SK-N-SH (cell line): ENCODE measurements at regions of chr5 and their contacts with region 1.

Region 1: GRCh38 chr5:177113566-177114424 is 19.8 kb upstream of the NSD1 start:
- DNase-seq: peak; percentile 89
- H3K4me3 ChIP-seq: no peak overlapping the region; a peak in 1 of 4 replicates
- H3K27ac ChIP-seq: no peak overlapping the region
- H3K4me1 ChIP-seq: no peaks in the 10 kb centered on the region; a peak in 1 of 4 replicates
- H3K27me3 ChIP-seq: no peaks in the 10 kb centered on the region
- CTCF ChIP-seq: peak; percentile 99
- EP300 ChIP-seq: no peak
- RAD21 ChIP-seq: peak; percentile 99

Region 2: DNA sequence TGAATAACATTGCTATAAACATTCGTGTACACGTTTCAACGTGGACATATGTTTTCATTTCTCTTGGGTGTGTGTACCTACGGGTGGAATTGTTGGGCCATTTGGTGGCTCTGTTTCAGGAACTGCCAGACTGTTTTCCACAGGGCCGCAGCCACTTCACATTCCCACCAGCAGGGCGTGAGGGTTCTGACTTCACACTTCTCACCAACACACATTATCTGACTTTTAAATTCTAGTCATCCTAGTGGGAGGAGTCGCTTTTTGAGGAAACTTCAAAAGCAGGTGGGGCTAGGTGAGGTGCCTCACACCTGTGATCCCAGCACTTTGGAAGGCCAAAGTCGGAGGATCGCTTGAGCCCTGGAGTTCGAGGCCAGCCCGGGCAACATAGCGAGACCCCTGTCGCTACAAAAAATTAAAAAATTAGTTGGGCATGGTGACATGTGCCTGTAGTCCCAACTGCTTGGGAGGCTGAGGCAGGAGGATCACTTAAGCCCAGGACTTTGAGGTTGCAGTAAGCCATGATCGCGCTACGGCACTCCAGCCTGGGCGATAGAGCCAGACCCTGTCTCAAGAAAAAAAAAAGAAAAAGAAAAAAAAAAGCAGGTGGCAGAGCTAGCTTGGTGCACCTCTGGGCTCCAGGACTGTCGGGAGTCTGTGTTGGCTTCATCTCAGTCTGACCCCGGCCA is 438.0 kb before region 1 on chr5:
- CTCF ChIA-PET with region 1: no interaction called
- POLR2A ChIA-PET with region 1: no interaction called
- DNase-seq: no peak
- H3K4me3 ChIP-seq: no peak overlapping the region; a peak in 1 of 4 replicates
- H3K27ac ChIP-seq: no peak overlapping the region
- H3K4me1 ChIP-seq: peaks cover 0 to 7% of the 10 kb centered on the region in 2 experiments; a peak in 1 of 4 replicates
- H3K27me3 ChIP-seq: no peaks in the 10 kb centered on the region
- CTCF ChIP-seq: peak; percentile 53
- EP300 ChIP-seq: no peak
- RAD21 ChIP-seq: no peak

Region 3: DNA sequence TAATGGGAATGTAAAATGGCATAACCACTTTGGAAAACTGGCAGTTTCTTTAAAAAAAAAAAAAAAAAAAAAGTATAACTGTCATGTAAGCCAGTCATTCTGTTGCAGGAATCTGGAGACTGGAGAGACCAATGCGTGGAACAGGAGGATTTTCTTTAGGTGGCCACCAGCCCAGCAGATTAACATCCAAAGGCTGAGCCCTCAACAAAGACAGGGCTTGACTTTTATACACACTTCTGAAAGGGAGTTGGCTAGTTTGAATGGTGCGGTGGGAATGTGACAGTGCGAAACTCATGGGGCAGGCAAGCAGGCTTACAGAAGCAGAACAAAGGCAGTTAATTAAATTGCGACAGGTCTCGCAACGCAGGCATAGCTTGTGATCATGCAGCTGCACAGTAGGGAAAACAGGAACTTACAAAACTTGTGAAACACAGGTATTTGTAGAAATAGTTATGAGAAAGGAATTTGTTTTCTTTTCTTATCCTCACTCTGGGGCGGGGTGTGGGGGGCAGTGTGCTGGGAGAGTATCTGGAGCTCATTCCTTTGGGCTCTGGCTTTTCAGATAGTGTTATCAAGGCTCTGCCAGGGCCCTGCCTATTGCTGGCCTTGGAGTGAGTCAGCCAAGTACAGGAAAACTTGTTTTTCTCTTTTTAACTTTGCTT is 119.2 kb before region 1 on chr5:
- CTCF ChIA-PET with region 1: no interaction called
- POLR2A ChIA-PET with region 1: no interaction called
- DNase-seq: no peak
- H3K4me3 ChIP-seq: no peak overlapping the region
- H3K27ac ChIP-seq: no peak overlapping the region
- H3K4me1 ChIP-seq: 0 out of 4 replicates have a peak, but pooled peaks cover 0 to 5% of the 10 kb centered on the region in 2 experiments
- H3K27me3 ChIP-seq: no peaks in the 10 kb centered on the region
- CTCF ChIP-seq: no peak
- EP300 ChIP-seq: no peak
- RAD21 ChIP-seq: no peak

Region 4: GRCh38 chr5:177071666-177072385 is 42.0 kb before region 1 on chr5:
- CTCF ChIA-PET with region 1: interaction called, 141 read pairs
- POLR2A ChIA-PET with region 1: no interaction called
- DNase-seq: peak; percentile 74
- H3K4me3 ChIP-seq: no peak overlapping the region
- H3K27ac ChIP-seq: no peak overlapping the region
- H3K4me1 ChIP-seq: no peaks in the 10 kb centered on the region; a peak in 1 of 4 replicates
- H3K27me3 ChIP-seq: no peaks in the 10 kb centered on the region
- CTCF ChIP-seq: peak; percentile 92
- EP300 ChIP-seq: no peak
- RAD21 ChIP-seq: peak; percentile 77

Region 5: GRCh38 chr5:177086924-177087706 is 26.7 kb before region 1 on chr5:
- CTCF ChIA-PET with region 1: interaction called, 87 read pairs
- POLR2A ChIA-PET with region 1: interaction called, 5 read pairs
- DNase-seq: peak; percentile 88
- H3K4me3 ChIP-seq: peak overlapping the region; percentile 39 to 47; a peak in 3 of 4 replicates
- H3K27ac ChIP-seq: no peak overlapping the region
- H3K4me1 ChIP-seq: peaks cover 0 to 9% of the 10 kb centered on the region in 2 experiments; a peak in 1 of 4 replicates
- H3K27me3 ChIP-seq: no peaks in the 10 kb centered on the region
- CTCF ChIP-seq: peak; percentile 58
- EP300 ChIP-seq: no peak
- RAD21 ChIP-seq: no peak

Region 6: DNA sequence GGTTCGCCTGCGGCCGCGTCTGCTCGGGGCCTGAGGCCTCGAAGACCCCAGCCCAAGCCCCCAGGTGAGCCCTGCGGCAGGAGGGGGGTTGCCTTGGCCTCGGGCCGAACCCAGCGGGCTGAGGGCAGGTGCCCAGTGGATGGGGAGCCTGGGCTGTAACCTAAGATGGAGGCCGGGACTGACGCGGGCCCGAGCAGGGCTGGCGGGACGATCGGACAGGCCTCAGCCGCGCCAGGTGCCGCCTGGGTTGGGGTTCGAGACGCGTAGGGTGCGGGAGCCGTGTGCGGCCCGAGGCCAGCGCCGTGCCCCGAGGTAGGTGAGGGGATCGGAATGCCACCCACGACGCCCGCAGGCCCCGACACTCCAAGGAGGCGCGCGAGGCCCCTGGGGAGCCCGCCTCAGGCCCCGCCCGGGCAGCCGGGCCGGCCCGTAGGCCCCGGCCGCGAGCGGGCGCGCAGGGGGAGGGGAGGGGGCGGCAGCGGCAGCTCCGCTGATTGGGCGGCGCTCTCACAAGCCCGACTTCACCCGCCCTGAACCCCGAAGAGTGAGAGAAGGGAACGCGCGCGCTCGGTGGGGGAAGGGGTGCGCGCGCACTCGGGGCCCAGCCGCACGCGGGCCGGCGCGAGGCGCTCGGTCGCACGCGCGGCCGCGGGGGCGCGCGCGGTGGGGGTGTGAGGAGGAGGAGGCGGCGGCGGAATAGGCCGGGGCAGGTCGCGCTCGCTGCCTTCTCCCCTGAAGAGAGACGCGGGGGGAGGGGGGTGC is 19.5 kb after region 1 on chr5 and contains the start of gene NSD1:
- CTCF ChIA-PET with region 1: interaction called, 20 read pairs
- POLR2A ChIA-PET with region 1: no interaction called
- DNase-seq: peak; percentile 95
- H3K4me3 ChIP-seq: peak within 1 kb of the TSS; percentile 67 to 70
- H3K27ac ChIP-seq: peak within 1 kb of the TSS; percentile 62 to 89
- H3K4me1 ChIP-seq: peaks cover 16 to 23% of the 10 kb centered on the region in 2 experiments; a peak in 3 of 4 replicates
- H3K27me3 ChIP-seq: no peaks in the 10 kb centered on the region
- CTCF ChIP-seq: no peak
- EP300 ChIP-seq: no peak
- RAD21 ChIP-seq: no peak
- polyA plus RNA-seq, gene NSD1: 6.7 and 9.0 TPM in 2 replicates

Region 7: DNA sequence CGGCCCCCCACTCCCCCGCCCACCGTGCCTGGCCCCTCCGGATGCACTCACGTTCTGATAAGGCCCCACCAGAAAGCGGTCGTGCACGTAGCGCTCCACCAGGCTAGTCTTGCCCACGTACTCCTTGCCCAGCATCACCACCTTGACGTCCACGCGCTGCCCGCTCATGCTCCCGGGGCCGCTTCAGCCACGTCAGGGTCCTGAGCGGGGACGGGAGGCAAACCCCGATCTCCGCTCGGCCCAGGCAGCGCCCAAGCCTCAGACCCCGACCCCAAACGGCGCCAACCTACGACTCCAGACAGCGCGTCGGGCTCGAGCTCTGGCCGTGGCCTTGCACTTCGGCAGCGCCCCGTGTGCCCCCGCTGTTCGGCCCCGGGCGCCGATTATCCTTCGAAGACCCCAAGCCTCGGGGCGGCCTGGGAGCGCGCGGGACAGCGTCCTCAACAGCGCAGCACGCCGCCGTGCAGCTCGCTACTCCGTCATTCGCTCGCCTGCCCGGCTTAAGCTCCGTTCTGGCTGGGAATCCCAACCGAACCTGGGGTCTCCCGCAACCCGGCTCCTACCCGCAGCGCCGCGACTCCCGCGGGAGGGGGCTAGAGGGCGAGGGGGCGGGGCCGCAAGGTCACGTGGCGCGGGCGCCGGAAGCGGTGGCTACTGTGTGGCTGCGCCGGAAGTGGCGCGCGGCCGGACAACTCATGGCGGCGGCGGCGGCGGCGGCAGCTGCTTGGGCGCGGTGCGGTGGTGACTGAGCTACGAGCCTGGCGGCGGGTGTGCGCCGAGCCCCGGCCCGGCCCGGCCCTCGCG is 189.5 kb after region 1 on chr5 and contains the starts of genes PRELID1 and RAB24:
- CTCF ChIA-PET with region 1: interaction called, 48 read pairs
- POLR2A ChIA-PET with region 1: no interaction called
- DNase-seq: peak; percentile 98
- H3K4me3 ChIP-seq: peak within 1 kb of the TSS; percentile 93 to 98
- H3K27ac ChIP-seq: peak within 1 kb of the TSS; percentile 76 to 79
- H3K4me1 ChIP-seq: peaks cover 0 to 28% of the 10 kb centered on the region in 2 experiments; a peak in 1 of 4 replicates
- H3K27me3 ChIP-seq: no peaks in the 10 kb centered on the region
- CTCF ChIP-seq: peak; percentile 40
- EP300 ChIP-seq: peak in 1 of 2 experiments; percentile 17; a peak in 1 of 4 replicates
- RAD21 ChIP-seq: no peak
- polyA plus RNA-seq, gene PRELID1: 344 TPM in 2 replicates
- polyA plus RNA-seq, gene RAB24: 101 and 117 TPM in 2 replicates

Region 8: DNA sequence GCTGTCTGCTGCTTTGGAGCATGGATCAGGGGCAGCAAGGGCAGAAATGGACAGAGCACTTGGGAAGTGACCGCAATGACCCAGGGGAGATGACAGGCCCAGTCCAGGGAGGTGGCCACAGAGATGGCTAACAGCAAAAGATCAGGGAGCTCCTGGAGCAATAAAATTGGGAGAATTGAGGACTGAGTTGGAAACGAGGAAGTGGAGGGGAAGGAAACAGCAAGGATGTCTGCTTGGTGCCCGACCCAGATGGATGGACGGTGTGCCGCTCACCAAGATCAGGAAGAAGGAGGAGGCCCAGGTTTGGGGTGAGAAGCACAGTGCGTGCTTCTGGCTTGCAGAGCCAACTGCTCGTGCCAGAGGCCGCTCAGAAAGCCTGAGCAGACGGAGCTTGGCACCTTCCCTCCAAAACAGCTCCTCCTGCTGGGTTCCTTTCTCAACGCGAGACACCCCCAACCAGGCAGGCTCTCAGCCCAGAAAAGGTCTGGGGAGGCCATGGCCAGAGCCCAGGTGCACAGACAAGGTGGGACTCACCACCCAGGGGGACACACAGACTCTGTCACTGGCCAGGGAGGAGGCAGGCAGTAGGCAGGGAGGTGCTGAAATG is 268.7 kb after region 1 on chr5:
- CTCF ChIA-PET with region 1: interaction called, 10 read pairs
- POLR2A ChIA-PET with region 1: no interaction called
- DNase-seq: peak; percentile 56
- H3K4me3 ChIP-seq: no peak overlapping the region
- H3K27ac ChIP-seq: no peak overlapping the region
- H3K4me1 ChIP-seq: peaks cover 0 to 7% of the 10 kb centered on the region in 2 experiments; a peak in 2 of 4 replicates
- H3K27me3 ChIP-seq: no peaks in the 10 kb centered on the region
- CTCF ChIP-seq: peak; percentile 27
- EP300 ChIP-seq: no peak
- RAD21 ChIP-seq: peak; percentile 38

Region 9: GRCh38 chr5:177497292-177498033 is 383.7 kb after region 1 on chr5 and contains the start of gene PDLIM7:
- CTCF ChIA-PET with region 1: interaction called, 12 read pairs
- POLR2A ChIA-PET with region 1: no interaction called
- DNase-seq: peak; percentile 98
- H3K4me3 ChIP-seq: peak within 1 kb of the TSS; percentile 83 to 94
- H3K27ac ChIP-seq: peak within 1 kb of the TSS; percentile 80 to 94
- H3K4me1 ChIP-seq: peaks cover 32 to 62% of the 10 kb centered on the region in 2 experiments; a peak in 3 of 4 replicates
- H3K27me3 ChIP-seq: no peaks in the 10 kb centered on the region
- CTCF ChIP-seq: no peak; the same call in 1 of the 2 replicates
- EP300 ChIP-seq: no peak
- RAD21 ChIP-seq: no peak
- polyA plus RNA-seq, gene PDLIM7: 183 and 206 TPM in 2 replicates